Uterus (tissue), 4 donors: ENCODE measurements at regions of chr1 and their contacts with region 1.

Region 1: DNA sequence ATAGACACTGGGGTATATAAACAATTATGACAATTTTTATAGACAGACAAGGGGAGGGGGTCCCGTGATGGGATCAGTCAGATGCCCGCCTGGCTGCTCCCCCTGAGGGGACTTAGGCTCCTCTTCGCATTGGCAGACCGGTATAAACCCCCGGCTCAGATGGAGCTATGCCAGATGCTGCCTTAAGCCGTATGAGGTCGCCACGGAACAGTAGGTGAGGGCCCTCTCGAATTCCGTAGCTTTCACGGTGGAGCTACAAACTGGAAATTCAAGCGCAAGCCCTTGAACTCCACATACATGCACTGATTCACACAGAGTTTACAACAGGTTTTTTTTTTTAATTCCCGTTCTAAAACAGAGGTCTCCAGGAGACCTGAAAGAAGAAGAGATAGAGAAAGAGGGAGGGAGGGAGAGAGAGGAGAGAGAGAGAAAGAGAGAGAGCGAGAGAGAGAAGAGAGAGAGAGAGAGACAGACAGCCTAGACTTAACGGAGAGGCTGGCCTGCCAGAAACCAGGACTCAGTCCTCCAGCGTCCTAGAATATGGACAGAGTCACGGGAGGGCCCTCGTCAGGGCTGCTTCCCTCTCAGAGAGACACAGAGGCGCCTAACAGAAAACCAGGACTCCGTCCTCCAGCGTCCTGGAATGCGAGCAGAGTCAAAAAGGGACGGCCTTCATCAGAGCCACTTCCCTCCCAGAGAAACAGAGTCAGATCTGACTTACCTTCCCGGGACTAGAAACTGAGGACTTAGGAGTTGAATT is 24.4 kb upstream of the TMEM54 start:
- DNase-seq: peak in 1 of 2 donors; percentile 32
- H3K4me3 ChIP-seq: peak overlapping the region in 1 of 2 donors; percentile 10
- H3K27ac ChIP-seq: no peak overlapping the region
- H3K4me1 ChIP-seq: peaks cover 0 to 5% of the 10 kb centered on the region in 2 donors
- H3K27me3 ChIP-seq: no peaks in the 10 kb centered on the region
- CTCF ChIP-seq: no peak
- POLR2A ChIP-seq: no peak

Region 2: GRCh38 chr1:33060579-33061083 is 135.0 kb after region 1 on chr1:
- intact Hi-C with region 1: loop called (anchors 10 kb)
- DNase-seq: no peak
- H3K4me3 ChIP-seq: no peak overlapping the region
- H3K27ac ChIP-seq: no peak overlapping the region
- H3K4me1 ChIP-seq: no peaks in the 10 kb centered on the region
- H3K27me3 ChIP-seq: no peaks in the 10 kb centered on the region
- CTCF ChIP-seq: no peak
- POLR2A ChIP-seq: no peak

Region 3: DNA sequence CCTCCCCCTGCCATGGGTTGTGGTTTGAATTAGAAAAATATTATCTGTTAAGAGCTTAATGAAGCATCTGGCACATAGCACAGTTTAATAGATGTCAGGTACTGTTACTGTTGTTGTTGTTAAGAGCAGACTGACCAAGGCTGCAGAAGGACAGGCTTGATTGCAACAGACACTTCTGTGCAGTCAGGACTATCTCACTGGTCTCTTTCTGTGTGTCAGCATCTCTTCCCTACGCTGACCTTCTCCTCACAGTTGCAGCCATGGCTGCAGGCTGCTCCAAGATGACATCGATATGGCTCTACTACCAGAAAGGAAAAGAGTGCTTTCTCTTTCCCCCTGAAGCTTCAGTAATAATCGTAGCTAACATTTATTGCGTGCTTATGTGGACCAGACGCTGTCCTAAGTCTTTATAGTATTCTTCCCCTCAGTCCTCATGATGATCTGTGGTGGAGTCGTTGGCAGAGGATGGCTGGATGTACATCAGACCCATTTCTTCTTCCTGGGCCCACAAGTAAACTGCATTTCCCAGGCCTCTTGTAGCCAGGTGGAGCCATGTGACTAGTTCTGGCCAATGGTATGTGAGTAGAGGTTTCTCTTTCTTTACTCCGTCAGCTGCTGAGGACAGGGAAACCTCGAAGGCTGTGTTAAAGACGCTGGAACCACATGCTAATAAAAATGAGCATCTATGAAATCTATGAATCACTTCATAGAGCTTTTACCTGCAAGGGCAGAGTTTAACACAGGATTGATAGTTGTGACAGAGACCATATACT is 311.8 kb after region 1 on chr1:
- intact Hi-C with region 1: no loop called
- DNase-seq: no peak
- H3K4me3 ChIP-seq: no peak overlapping the region
- H3K27ac ChIP-seq: no peak overlapping the region
- H3K4me1 ChIP-seq: no peaks in the 10 kb centered on the region
- H3K27me3 ChIP-seq: no peaks in the 10 kb centered on the region
- CTCF ChIP-seq: no peak
- POLR2A ChIP-seq: no peak